ENCODE measurements at regions of chr9 and their contacts with region 1.

Region 1: DNA sequence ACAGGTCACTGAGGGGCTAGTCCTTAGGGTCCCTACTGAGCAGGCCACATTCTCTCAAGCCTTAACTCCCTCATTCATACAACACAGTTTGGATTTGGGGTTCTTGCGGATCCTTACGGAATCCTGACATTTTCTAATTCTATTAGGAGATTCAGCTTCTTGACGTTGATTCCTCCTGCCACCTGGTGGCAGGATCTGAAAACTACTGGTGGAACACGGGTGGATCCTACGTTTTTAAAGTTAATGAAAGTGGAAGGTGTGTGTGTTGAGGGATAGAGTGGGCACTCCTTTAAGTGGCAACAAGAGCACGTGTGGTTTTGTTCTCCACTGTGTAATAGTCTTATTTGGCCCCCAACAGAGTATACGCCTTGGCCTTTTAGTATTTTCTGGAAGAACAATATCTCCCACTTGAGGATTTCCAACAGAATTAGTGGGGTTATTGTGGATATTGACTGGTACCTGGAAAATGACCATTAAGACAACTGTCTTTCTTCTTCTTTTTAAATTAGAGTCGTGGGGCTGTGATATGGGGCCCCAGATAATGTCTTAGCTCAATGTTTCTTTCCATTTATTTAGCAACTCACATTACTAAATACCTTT is 25.2 kb downstream of the SLC28A3 start:
- DNase-seq: peak; percentile 22
- ATAC-seq: peak; percentile 42
- H3K4me3 Mint-ChIP-seq: no peak overlapping the region
- H3K27ac Mint-ChIP-seq: no peak overlapping the region
- H3K4me1 Mint-ChIP-seq: no peaks in the 10 kb centered on the region
- H3K27me3 Mint-ChIP-seq: peaks cover 2% of the 10 kb centered on the region
- CTCF ChIP-seq: no peak

Region 2: DNA sequence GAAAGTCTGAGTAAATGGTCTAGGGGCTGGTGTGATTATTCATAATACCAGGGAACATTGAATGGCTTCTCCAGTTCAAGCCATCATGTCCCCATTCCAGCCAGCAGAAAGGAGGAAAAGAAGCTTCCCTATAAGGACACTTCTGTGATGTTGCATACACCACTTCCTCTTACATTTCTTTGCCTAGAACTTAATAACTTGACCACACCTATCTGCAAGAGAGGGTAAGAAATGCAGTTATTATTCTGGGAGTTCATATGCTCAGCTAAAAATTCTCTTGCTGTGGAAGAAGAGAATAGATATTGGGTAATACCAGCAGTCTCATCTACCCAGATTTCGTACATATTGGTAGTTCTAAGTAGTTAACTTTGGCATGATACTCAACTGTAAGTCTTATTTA is 140.9 kb before region 1 on chr9:
- CTCF ChIA-PET with region 1: interaction called, 3 read pairs
- POLR2A ChIA-PET with region 1: no interaction called
- intact Hi-C with region 1: loop called (anchors 1 kb)
- DNase-seq: no peak
- ATAC-seq: no peak
- H3K4me3 Mint-ChIP-seq: no peak overlapping the region
- H3K27ac Mint-ChIP-seq: no peak overlapping the region
- H3K4me1 Mint-ChIP-seq: no peaks in the 10 kb centered on the region
- H3K27me3 Mint-ChIP-seq: peaks cover 4% of the 10 kb centered on the region
- CTCF ChIP-seq: no peak

Region 3: GRCh38 chr9:84261082-84261746 is 54.2 kb before region 1 on chr9:
- CTCF ChIA-PET with region 1: interaction called, 12 read pairs
- POLR2A ChIA-PET with region 1: no interaction called
- intact Hi-C with region 1: loop called (anchors 1 kb)
- DNase-seq: peak; percentile 27
- ATAC-seq: peak; percentile 40
- H3K4me3 Mint-ChIP-seq: peak overlapping the region; percentile 39
- H3K27ac Mint-ChIP-seq: no peak overlapping the region
- H3K4me1 Mint-ChIP-seq: peaks cover 6% of the 10 kb centered on the region
- H3K27me3 Mint-ChIP-seq: peaks cover 21% of the 10 kb centered on the region
- CTCF ChIP-seq: peak; percentile 72